ENCODE measurements at regions of chr1 and their contacts with region 1.

Region 1: DNA sequence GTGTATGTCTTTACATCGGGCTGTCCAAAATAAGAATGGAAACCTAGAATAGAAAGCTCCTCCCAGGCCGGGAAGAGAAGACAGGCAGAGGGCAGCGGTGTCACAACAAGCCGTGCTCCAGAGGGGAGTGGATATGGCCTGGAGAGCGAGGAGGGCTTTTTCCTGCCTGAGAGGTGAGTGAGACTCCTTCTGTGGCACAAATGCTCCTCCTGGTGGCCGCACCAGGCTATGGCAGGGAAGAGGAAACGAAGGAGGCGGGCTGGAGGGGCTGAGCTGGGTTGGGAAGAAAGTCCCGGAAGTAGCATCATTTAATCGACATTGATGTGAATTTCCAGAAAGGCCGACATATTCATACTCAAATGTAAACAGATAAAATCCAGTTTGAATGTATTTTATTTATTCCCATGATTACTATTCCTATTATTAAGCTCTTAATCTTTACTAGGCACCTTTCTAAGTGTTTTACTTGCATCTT is 54.7 kb downstream of the MEF2D start:
- DNase-seq: peak; percentile 79
- H3K4me3 Mint-ChIP-seq: no peak overlapping the region
- H3K27ac Mint-ChIP-seq: no peak overlapping the region
- H3K4me1 Mint-ChIP-seq: peaks cover 8% of the 10 kb centered on the region
- H3K27me3 Mint-ChIP-seq: peaks cover 61% of the 10 kb centered on the region

Region 2: DNA sequence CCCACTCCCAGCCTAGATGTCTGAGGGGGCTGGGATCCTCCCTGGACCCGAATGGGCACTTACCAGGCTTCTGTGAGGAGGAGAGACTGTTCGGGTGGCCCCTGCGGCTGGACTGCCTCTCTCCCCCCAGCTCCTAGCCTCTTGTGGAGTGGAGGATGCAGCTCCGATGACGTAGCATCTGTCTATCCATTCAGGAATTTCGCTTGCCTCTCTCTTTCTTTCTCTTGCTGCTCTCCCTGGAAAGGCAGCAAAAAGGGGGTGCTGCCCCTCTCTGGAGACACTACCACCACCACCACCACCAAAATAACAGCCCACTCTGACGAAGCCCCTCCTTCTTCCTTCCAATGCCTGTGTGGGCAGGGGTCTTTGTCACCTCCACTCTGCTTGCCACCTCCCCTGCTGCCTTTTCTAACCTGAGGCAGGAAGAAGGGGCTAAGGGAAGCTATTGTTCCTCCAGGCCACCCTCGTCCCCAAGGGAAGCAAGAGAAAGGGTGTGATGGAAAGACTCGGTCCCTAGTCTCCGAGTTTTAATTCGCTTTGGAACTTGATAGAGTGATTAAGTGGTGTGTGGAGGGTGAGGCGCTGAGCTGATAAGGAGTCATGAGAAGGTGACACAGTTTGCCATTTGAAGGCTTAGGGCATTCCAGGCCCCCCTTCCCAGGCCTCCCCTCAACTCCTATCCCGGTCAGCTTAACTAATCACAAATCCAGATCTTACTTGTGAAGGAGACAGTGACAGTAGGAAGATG is 16.3 kb before region 1 on chr1:
- CTCF ChIA-PET with region 1: interaction called, 12 read pairs
- POLR2A ChIA-PET with region 1: no interaction called
- DNase-seq: no peak
- H3K4me3 Mint-ChIP-seq: no peak overlapping the region
- H3K27ac Mint-ChIP-seq: no peak overlapping the region
- H3K4me1 Mint-ChIP-seq: no peaks in the 10 kb centered on the region
- H3K27me3 Mint-ChIP-seq: peaks cover 97% of the 10 kb centered on the region

Region 3: DNA sequence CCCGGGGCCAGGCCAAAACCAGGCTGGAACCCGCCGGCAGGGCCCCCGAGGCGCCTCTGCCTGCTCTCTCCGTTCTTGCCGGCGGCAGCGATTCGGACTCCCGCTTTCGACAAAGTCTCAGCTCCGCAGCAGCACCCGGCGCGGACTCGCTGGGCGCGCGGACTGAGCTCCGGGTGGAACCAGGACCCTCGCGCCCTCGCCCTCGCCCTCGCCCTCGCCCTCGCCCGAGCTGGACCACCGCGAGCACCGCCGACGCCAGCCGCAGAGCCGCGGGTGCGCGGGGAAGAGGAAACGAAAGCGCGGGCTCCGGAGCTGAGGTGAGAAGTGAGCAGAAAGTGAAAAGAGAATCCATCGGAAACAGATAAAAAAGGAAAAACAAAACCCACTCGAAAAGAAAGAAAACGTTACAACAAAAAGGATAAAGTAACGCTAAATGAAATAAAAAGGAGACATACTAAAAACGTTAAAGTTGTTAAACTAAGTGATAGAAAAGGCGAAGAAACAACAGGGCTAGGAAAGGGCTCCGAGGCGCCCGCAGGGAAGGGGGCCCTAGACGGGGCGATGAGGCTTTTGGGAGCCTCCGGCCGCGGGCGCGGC is 10.2 kb before region 1 on chr1:
- CTCF ChIA-PET with region 1: interaction called, 12 read pairs
- POLR2A ChIA-PET with region 1: no interaction called
- DNase-seq: peak; percentile 39
- H3K4me3 Mint-ChIP-seq: peak overlapping the region; percentile 77
- H3K27ac Mint-ChIP-seq: peak overlapping the region; percentile 76
- H3K4me1 Mint-ChIP-seq: peaks cover 31% of the 10 kb centered on the region
- H3K27me3 Mint-ChIP-seq: peaks cover 96% of the 10 kb centered on the region

Measured in activated CD4-positive, alpha-beta T cell treated with anti-CD3 and anti-CD28 coated beads, Interleukin-2, amount 10 ng/mL, durations not matched to agents 7 days and 5 days (primary cell).